A549 (cell line): ENCODE measurements at regions of chr3 and their contacts with region 1.

Region 1: DNA sequence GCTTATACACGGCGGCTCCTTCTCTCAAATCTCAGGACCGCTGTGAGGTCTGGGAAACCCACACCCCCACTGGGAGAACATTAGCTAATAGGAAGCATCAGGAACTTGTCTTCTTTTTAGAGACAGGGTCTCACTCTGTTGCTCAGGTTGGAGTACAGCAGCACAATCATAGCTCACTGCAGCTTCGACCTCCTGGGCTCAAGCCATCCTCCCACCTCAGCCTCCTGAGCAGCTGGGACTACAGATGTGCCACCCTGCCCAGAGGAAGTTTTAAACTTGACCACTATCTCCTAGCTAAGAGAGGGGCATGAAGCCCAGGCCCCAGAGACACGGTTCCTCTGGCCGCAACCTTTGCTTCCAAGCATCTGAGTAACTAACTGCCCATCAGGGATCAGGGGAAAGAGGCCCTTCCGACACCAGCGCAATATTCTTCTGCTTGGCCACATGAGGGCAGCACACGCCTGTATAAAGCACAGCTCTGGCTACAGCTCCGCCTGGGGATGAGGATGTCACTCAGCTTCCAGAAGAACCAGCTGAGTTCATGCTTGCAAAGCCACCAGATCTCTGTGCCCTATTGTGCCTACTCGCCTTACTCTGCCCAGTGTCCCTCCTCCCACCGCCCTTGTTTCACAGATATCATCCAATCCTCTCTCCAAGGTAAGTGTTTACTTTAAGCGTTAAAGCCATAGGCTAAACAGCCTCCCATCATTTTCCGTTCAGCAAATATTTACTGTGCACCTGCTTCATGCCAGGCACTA is 57.5 kb upstream of the SLC6A11 start:
- DNase-seq: peak; percentile 74 to 87
- ATAC-seq: peak; percentile 86 to 99
- H3K4me3 ChIP-seq: no peak overlapping the region
- H3K27ac ChIP-seq: no peak overlapping the region
- H3K4me1 ChIP-seq: no peaks in the 10 kb centered on the region
- CTCF ChIP-seq: peak; percentile 81
- EP300 ChIP-seq: no peak
- POLR2A ChIP-seq: no peak
- RAD21 ChIP-seq: peak; percentile 90 to 96

Region 2: DNA sequence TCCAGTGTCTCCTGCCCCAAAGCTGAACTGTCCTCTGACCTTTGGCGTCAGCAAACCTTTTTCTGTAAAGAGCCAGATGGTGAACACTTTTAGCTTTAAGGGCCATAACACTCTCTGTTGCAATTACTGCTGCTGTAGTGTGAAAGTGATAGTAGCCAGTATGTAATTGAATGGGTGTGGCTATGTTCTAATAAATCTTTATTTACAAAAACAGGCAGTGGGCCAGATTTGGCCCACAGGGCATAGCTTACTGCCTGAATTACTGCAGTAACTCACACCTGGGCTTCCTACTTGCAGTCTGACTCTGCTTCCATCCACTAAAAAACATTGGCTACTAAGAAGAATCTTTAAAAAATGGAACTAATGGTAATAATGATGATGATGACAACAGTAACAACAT is 10.4 kb before region 1 on chr3:
- CTCF ChIA-PET with region 1: interaction called, 38 read pairs
- POLR2A ChIA-PET with region 1: interaction called, 4 read pairs
- DNase-seq: no peak
- ATAC-seq: no peak
- H3K4me3 ChIP-seq: no peak overlapping the region
- H3K27ac ChIP-seq: no peak overlapping the region
- H3K4me1 ChIP-seq: no peaks in the 10 kb centered on the region
- CTCF ChIP-seq: no peak
- EP300 ChIP-seq: no peak
- POLR2A ChIP-seq: no peak
- RAD21 ChIP-seq: no peak

Region 3: GRCh38 chr3:10780225-10780624 is 21.7 kb after region 1 on chr3:
- CTCF ChIA-PET with region 1: interaction called, 18 read pairs
- POLR2A ChIA-PET with region 1: no interaction called
- DNase-seq: no peak
- ATAC-seq: no peak
- H3K4me3 ChIP-seq: no peak overlapping the region
- H3K27ac ChIP-seq: no peak overlapping the region
- H3K4me1 ChIP-seq: no peaks in the 10 kb centered on the region
- CTCF ChIP-seq: no peak
- EP300 ChIP-seq: no peak
- POLR2A ChIP-seq: no peak
- RAD21 ChIP-seq: no peak

Region 4: DNA sequence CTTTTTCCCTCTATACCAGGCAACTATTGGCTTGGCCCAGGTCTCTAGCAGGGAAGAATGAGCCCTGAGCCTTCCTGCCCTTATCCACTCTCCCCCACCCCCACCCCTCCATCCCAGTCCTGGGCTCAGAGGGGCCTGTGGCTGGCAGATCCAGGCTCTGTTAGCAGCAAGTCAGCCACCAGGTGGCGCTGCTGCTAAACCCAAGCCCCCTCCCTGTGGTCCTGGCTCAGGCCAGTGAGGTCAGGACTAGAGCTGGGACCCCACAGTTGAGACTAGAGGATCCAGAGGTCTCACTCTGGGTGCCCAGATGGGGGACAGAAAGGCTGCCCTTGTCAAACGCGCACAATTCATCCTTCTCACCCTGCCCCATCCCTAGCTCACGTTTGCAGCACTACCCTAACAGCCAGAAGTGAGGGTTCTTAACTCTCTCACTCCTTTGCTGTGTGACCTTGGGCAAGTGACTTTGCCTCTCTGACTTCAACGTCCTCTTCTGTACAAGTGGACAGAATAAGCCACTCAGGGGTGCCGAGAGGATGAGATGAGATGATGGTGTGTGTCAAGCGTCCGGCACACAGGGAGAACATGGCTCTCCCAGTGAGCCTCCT is 187.3 kb after region 1 on chr3:
- CTCF ChIA-PET with region 1: interaction called, 69 read pairs
- POLR2A ChIA-PET with region 1: no interaction called
- DNase-seq: peak; percentile 53 to 75
- ATAC-seq: peak; percentile 81 to 96
- H3K4me3 ChIP-seq: no peak overlapping the region
- H3K27ac ChIP-seq: no peak overlapping the region
- H3K4me1 ChIP-seq: no peaks in the 10 kb centered on the region
- CTCF ChIP-seq: peak; percentile 65
- EP300 ChIP-seq: no peak
- POLR2A ChIP-seq: no peak
- RAD21 ChIP-seq: peak; percentile 63 to 74